Head of caudate nucleus (tissue), 42 donors: ENCODE measurements at regions of chr12 and their contacts with region 1.

Region 1: DNA sequence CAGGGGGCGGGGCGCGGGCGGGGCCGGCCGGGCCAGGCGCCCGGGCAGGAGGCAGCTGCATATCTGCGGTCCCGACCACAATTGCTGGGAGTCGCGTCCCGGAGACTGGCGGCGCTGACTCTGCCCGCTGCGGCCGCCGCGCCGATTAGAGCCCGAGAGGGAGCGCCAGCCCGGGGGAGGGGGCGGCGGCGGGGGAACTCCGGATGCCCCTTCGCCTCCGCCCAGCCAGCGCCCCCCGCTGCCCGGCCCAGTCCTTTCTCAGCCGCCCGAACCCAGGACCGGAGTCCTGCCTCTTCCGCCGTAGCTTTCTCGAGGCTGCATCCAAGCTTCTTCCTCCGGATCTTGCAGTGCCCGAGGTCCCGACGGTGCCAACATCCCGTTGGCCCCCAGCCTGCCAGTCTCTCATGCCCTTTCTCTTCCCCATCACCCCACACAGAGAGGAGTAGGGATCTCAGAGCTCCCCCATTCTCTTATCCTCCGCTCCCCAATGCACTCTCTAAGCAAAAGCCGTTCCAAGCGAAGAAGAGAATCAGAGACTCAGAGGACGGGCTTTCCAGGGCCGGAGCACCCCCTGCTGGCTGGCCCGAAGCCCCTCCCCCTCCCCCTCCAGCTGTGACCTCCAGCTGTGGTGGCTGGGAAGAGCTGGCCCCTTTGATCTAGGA is 8.8 kb upstream of the SP7 start:
- DNase-seq: peak; percentile 70 to 93 (median 82)

Region 2: GRCh38 chr12:53159195-53159839 is 185.6 kb before region 1 on chr12:
- intact Hi-C with region 1: no loop called
- DNase-seq: peak; percentile 49 to 94 (median 85)

Region 3: DNA sequence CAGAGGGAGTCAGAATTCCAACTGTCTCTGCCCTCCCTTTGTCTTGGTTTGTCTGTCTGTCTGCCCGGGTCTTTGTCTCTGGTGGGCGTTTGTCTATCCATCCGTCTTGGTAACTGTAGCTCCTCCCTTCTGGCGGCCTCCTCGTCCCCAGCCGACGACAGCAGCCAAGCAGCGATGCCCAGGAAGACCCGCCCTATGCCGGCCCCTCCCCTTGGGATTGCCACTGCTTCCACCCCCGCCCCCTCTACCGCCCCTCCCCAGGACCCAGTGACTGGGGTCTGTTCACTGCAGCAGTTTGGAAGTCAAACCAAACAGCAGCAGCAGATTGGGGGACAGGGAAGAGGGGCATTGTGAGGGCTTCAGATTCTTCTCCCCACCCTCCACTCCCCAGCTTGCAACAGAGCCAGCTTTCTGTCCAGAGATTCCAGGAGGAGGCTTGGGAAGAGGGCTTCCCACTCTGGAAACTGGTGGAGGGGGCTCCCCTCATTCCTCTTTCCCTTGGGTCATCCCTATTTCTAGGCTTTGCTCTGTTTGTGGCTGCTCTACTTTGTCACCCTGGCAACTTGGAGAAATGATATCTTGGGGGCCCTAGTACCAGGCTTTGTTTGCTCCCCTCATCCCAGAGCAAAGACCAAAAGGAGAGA is 110.6 kb before region 1 on chr12:
- intact Hi-C with region 1: no loop called
- DNase-seq: peak in 2 of 42 donors; percentile 37 to 44

Region 4: DNA sequence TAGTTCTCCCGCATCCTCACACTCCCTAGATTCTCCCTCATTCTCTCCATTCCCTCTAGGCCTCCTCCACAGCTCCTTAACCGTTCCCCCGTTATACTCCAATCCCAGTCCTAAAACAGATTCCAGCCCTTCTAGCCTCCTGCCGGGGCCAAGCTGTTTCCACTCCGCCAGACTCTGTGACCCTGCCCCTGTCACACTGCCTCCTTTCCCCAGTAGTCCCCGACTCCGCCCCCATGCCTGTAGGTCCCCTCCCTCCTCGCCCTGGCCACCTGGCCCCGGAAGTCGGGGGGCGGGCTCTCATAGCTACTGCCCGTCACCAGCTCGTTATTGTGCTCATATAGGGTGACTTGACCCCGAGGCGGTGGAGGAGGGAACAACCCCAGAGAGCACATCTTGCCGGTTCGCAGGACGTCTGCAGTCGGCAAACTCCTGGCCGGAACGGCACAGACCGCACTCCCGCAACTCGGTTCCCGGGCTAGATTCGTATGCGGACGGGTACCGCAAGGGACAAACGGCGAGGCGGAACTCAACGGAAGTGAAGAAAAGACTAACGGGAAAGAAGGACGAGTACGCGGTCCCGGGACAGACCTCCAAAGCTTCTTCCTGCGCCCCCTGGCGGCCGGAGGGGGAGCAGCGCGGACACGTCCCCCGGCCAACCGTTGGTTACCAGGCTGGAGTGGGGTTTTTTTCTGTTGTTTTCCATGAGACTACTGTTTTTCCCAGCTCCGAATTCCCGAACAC is 23.7 kb before region 1 on chr12 and contains the start of gene AAAS:
- intact Hi-C with region 1: loop called (anchors 1 kb)
- DNase-seq: peak; percentile 90 to 98 (median 96)